ENCODE measurements at regions of chr15 and their contacts with region 1.

Region 1: DNA sequence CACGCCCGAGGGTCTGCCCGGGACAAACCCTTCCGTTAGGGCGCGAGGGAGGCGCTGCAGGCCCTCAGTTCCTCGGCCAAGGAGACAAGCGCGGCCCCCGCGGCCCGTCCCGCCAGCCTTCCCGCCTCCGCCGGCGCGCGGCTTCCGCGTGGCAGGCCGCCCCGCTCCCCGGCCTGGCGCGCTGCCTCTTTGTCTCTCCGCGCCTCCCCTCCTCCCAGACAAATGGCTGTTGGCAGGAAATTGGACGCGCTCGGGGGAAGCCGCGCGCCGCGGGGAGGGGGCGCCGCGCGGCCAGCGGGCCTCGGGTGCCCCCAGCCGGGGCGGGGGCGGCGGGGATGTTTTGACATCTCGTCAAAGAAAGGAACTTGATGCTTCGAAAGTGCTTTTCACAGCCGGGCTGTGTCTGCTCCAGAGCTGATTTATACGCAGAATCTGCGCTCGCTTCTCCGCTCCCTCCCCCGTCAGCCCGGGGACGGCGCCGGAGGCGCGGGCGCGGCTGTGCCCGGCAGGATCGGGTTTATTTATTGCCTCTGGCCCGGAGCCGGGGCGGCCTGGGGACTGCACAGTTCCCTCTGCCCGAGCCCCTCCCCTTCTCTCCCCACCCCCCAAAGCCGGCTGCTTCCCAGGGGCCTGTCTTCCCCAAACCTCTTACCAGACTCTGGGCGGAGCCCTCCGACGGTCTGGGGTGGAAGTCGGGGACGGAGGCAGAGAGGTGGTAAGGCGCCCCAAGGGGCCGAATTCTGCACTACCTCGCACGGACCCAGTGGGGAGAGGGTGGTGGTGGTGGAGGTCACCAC is 20.7 kb downstream of the SHF start:
- DNase-seq: peak; percentile 87 to 92 (median 88)
- ATAC-seq: peak; percentile 93
- H3K4me3 ChIP-seq: peak overlapping the region; percentile 69
- H3K27ac ChIP-seq: peak overlapping the region; percentile 86
- H3K4me1 ChIP-seq: peaks cover 31 to 49% of the 10 kb centered on the region in 2 experiments
- H3K27me3 ChIP-seq: no peaks in the 10 kb centered on the region
- CTCF ChIP-seq: peak; percentile 78 to 95 (median 86)
- EP300 ChIP-seq: no peak
- POLR2A ChIP-seq: peak; percentile 71
- RAD21 ChIP-seq: peak; percentile 25 to 36

Region 2: GRCh38 chr15:44698641-44699040 is 468.4 kb before region 1 on chr15:
- CTCF ChIA-PET with region 1: no interaction called
- POLR2A ChIA-PET with region 1: no interaction called
- in situ Hi-C with region 1: no loop called
- intact Hi-C with region 1: no loop called
- DNase-seq: no peak
- ATAC-seq: no peak
- H3K4me3 ChIP-seq: no peak overlapping the region
- H3K27ac ChIP-seq: no peak overlapping the region
- H3K4me1 ChIP-seq: no peaks in the 10 kb centered on the region
- H3K27me3 ChIP-seq: no peaks in the 10 kb centered on the region
- CTCF ChIP-seq: no peak
- EP300 ChIP-seq: no peak
- POLR2A ChIP-seq: no peak
- RAD21 ChIP-seq: no peak

Region 3: DNA sequence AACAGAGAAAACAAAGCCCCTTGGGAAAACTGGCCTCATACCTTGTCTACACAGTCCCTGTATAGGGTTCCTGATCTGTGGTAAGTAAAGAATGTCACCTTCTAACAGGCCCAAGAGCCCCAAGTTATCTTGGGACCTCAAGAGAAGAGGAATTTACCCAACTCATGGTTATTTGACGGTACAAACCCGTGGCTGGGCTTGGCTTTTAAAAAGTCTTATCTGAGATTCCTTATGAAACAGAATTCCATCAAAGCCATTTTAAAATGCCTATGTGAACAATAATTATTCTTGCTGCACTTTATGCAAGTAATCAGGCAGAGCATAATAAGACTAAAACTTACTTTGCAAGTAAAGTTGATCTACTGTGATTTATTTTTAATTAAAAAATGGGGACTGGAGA is 158.0 kb before region 1 on chr15:
- CTCF ChIA-PET with region 1: no interaction called
- POLR2A ChIA-PET with region 1: no interaction called
- in situ Hi-C with region 1: no loop called
- intact Hi-C with region 1: no loop called
- DNase-seq: no peak
- ATAC-seq: no peak
- H3K4me3 ChIP-seq: no peak overlapping the region
- H3K27ac ChIP-seq: no peak overlapping the region
- H3K4me1 ChIP-seq: no peaks in the 10 kb centered on the region
- H3K27me3 ChIP-seq: peaks cover 3 to 4% of the 10 kb centered on the region in 2 experiments; a peak in 3 of 5 replicates
- CTCF ChIP-seq: no peak
- EP300 ChIP-seq: no peak
- POLR2A ChIP-seq: no peak
- RAD21 ChIP-seq: no peak

Region 4: GRCh38 chr15:45155739-45156138 is 11.3 kb before region 1 on chr15:
- CTCF ChIA-PET with region 1: no interaction called
- POLR2A ChIA-PET with region 1: interaction called, 14 read pairs
- in situ Hi-C with region 1: no loop called
- intact Hi-C with region 1: no loop called
- DNase-seq: no peak
- ATAC-seq: no peak
- H3K4me3 ChIP-seq: no peak overlapping the region
- H3K27ac ChIP-seq: no peak overlapping the region
- H3K4me1 ChIP-seq: peaks cover 6 to 12% of the 10 kb centered on the region in 2 experiments; a peak in 3 of 5 replicates
- H3K27me3 ChIP-seq: peaks cover 0 to 4% of the 10 kb centered on the region in 2 experiments; a peak in 2 of 5 replicates
- CTCF ChIP-seq: no peak
- EP300 ChIP-seq: no peak
- POLR2A ChIP-seq: no peak
- RAD21 ChIP-seq: no peak

Region 5: GRCh38 chr15:45198337-45199135 is 31.5 kb after region 1 on chr15:
- CTCF ChIA-PET with region 1: no interaction called
- POLR2A ChIA-PET with region 1: interaction called, 6 read pairs
- in situ Hi-C with region 1: no loop called
- intact Hi-C with region 1: loop called (anchors 1 kb)
- DNase-seq: peak; percentile 77 to 94 (median 81)
- ATAC-seq: peak; percentile 76
- H3K4me3 ChIP-seq: peak overlapping the region; percentile 79
- H3K27ac ChIP-seq: peak overlapping the region; percentile 92
- H3K4me1 ChIP-seq: peaks cover 0 to 2% of the 10 kb centered on the region in 2 experiments; a peak in 2 of 5 replicates
- H3K27me3 ChIP-seq: no peaks in the 10 kb centered on the region
- CTCF ChIP-seq: peak; percentile 72 to 89 (median 81)
- EP300 ChIP-seq: peak; percentile 45; the same call in 1 of the 2 replicates
- POLR2A ChIP-seq: peak; percentile 76
- RAD21 ChIP-seq: peak in 1 of 2 experiments; percentile 26; a peak in 2 of 4 replicates

Region 6: DNA sequence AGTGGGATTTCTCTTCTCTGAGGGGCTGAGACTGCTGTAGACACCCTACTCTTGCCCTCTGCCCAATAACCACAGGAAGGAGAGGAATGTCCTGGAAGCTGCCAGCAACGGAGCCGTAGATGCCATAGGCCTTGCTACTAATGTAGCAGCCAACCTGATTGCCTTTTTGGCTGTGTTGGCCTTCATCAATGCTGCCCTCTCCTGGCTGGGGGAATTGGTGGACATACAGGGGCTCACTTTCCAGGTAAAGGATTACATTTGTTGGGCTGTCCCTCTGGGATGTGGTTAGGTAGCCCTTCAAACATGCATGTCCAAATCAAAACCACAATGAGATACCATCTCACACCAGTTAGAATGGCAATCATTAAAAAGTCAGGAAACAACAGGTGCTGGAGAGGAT is 101.1 kb after region 1 on chr15:
- CTCF ChIA-PET with region 1: no interaction called
- POLR2A ChIA-PET with region 1: no interaction called
- in situ Hi-C with region 1: no loop called
- intact Hi-C with region 1: loop called (anchors 1 kb)
- DNase-seq: peak in 3 of 4 experiments; percentile 13 to 36 (median 15)
- ATAC-seq: peak; percentile 65; the same call in 1 of the 3 replicates
- H3K4me3 ChIP-seq: no peak overlapping the region
- H3K27ac ChIP-seq: no peak overlapping the region
- H3K4me1 ChIP-seq: no peaks in the 10 kb centered on the region
- H3K27me3 ChIP-seq: no peaks in the 10 kb centered on the region
- CTCF ChIP-seq: peak; percentile 35 to 56 (median 48); a peak in 4 of 6 replicates
- EP300 ChIP-seq: no peak
- POLR2A ChIP-seq: no peak
- RAD21 ChIP-seq: peak in 1 of 2 experiments; percentile 43; a peak in 2 of 4 replicates

Region 7: GRCh38 chr15:45457641-45458433 is 290.8 kb after region 1 on chr15:
- CTCF ChIA-PET with region 1: interaction called, 48 read pairs
- POLR2A ChIA-PET with region 1: interaction called, 3 read pairs
- in situ Hi-C with region 1: no loop called
- intact Hi-C with region 1: loop called (anchors 1 kb)
- DNase-seq: peak; percentile 67 to 84 (median 78)
- ATAC-seq: peak; percentile 87
- H3K4me3 ChIP-seq: peak overlapping the region; percentile 19
- H3K27ac ChIP-seq: 0 out of 3 replicates have a peak overlapping the region, but pooled peaks have one; percentile 24
- H3K4me1 ChIP-seq: peaks cover 6 to 9% of the 10 kb centered on the region in 2 experiments; a peak in 4 of 5 replicates
- H3K27me3 ChIP-seq: peaks cover 0 to 4% of the 10 kb centered on the region in 2 experiments; a peak in 2 of 5 replicates
- CTCF ChIP-seq: peak; percentile 74 to 91 (median 82)
- EP300 ChIP-seq: 0 out of 2 replicates have a peak, but pooled peaks have one; percentile 3
- POLR2A ChIP-seq: no peak
- RAD21 ChIP-seq: peak; percentile 83 to 86

Measured in K562 (cell line).